Activated CD4-positive, alpha-beta T cell treated with anti-CD3 and anti-CD28 coated beads for 36 hours (primary cell): ENCODE measurements at regions of chr12 and their contacts with region 1.

Region 1: GRCh38 chr12:116277393-116278278 is at the start of gene MED13L:
- DNase-seq: peak; percentile 92
- ATAC-seq: peak; percentile 82
- H3K4me3 Mint-ChIP-seq: peak within 1 kb of the TSS; percentile 95
- H3K27ac Mint-ChIP-seq: peak within 1 kb of the TSS; percentile 89
- H3K4me1 Mint-ChIP-seq: peaks cover 36% of the 10 kb centered on the region
- H3K27me3 Mint-ChIP-seq: no peaks in the 10 kb centered on the region
- total RNA-seq, gene MED13L: 38.5 to 41.9 TPM

Region 2: GRCh38 chr12:115227137-115227615 is 1050.5 kb before region 1 on chr12:
- CTCF ChIA-PET with region 1: no interaction called
- POLR2A ChIA-PET with region 1: no interaction called
- intact Hi-C with region 1: no loop called
- DNase-seq: no peak
- ATAC-seq: no peak
- H3K4me3 Mint-ChIP-seq: no peak overlapping the region
- H3K27ac Mint-ChIP-seq: no peak overlapping the region
- H3K4me1 Mint-ChIP-seq: no peaks in the 10 kb centered on the region
- H3K27me3 Mint-ChIP-seq: no peaks in the 10 kb centered on the region

Region 3: GRCh38 chr12:116066381-116067230 is 211.0 kb before region 1 on chr12:
- CTCF ChIA-PET with region 1: interaction called, 3 read pairs
- POLR2A ChIA-PET with region 1: no interaction called
- intact Hi-C with region 1: loop called in 1 of 2 experiments (anchors 2 kb)
- DNase-seq: peak; percentile 78
- ATAC-seq: peak; percentile 83
- H3K4me3 Mint-ChIP-seq: no peak overlapping the region
- H3K27ac Mint-ChIP-seq: peak overlapping the region; percentile 12
- H3K4me1 Mint-ChIP-seq: peaks cover 36% of the 10 kb centered on the region
- H3K27me3 Mint-ChIP-seq: no peaks in the 10 kb centered on the region

Region 4: GRCh38 chr12:116210131-116210530 is 67.5 kb before region 1 on chr12:
- CTCF ChIA-PET with region 1: no interaction called
- POLR2A ChIA-PET with region 1: no interaction called
- intact Hi-C with region 1: no loop called
- DNase-seq: no peak
- ATAC-seq: no peak
- H3K4me3 Mint-ChIP-seq: no peak overlapping the region
- H3K27ac Mint-ChIP-seq: no peak overlapping the region
- H3K4me1 Mint-ChIP-seq: peaks cover 67% of the 10 kb centered on the region
- H3K27me3 Mint-ChIP-seq: no peaks in the 10 kb centered on the region

Region 5: DNA sequence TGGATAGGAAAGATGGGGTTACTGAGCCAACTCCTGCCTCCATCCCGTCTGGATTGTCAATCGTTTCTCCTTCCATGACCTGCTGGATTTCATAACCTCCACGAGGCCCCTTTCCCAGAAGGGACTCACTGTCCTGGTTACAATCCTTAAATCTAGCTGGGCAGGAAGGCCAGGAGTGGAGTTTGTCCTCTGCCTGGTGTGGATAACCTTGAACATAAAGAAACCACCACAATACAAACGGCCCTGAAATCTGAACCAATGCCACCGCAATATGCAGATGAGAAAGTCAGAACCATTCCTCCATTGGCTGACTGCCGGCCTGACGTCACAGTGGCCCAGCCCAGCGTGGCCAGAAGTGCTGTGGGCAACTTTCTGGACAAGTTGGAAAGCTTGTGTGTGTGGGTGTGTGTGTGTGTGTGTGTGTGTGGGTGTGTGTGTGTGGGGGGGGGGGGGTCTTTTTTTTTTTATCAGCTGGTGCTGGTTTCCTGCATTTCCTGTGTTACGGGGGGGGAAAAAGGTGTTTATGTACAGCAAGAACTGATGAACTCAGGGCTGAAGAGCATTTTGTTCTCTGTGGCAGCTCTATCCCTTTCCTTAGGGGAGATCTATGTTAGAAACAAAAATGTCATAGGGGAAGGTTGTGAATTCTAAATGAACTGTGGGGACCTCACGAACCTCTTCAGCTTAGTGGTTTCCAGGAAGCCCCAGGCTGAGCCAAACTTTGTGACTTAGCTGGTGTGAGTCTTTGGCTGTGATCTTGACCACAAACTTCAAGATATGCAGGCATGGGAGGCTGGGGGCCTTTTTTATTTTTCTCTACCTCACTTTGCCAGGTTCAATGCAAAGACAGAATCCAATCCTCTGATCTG is 81.5 kb after region 1 on chr12:
- CTCF ChIA-PET with region 1: no interaction called
- POLR2A ChIA-PET with region 1: no interaction called
- intact Hi-C with region 1: loop called in 1 of 2 experiments (anchors 1 kb)
- DNase-seq: peak; percentile 76
- ATAC-seq: peak; percentile 67
- H3K4me3 Mint-ChIP-seq: peak overlapping the region; percentile 69
- H3K27ac Mint-ChIP-seq: peak overlapping the region; percentile 90
- H3K4me1 Mint-ChIP-seq: peaks cover 27% of the 10 kb centered on the region
- H3K27me3 Mint-ChIP-seq: no peaks in the 10 kb centered on the region

Region 6: GRCh38 chr12:116559162-116559935 is 281.7 kb after region 1 on chr12 and contains the start of gene MAP1LC3B2:
- CTCF ChIA-PET with region 1: no interaction called
- POLR2A ChIA-PET with region 1: no interaction called
- intact Hi-C with region 1: loop called (anchors 1 to 2 kb)
- DNase-seq: peak; percentile 87
- ATAC-seq: peak; percentile 89
- H3K4me3 Mint-ChIP-seq: peak within 1 kb of the TSS; percentile 66
- H3K27ac Mint-ChIP-seq: peak within 1 kb of the TSS; percentile 96
- H3K4me1 Mint-ChIP-seq: peaks cover 33% of the 10 kb centered on the region
- H3K27me3 Mint-ChIP-seq: no peaks in the 10 kb centered on the region
- total RNA-seq, gene MAP1LC3B2: 1.8 TPM in 1 of 2 experiments, not detected in the other

Region 7: GRCh38 chr12:116737774-116738700 is 460.4 kb after region 1 on chr12 and contains the starts of genes RNFT2 and SPRING1:
- CTCF ChIA-PET with region 1: no interaction called
- POLR2A ChIA-PET with region 1: no interaction called
- intact Hi-C with region 1: loop called in 1 of 2 experiments (anchors 1 kb)
- DNase-seq: peak; percentile 99
- ATAC-seq: peak; percentile 99
- H3K4me3 Mint-ChIP-seq: peak within 1 kb of the TSS; percentile 85
- H3K27ac Mint-ChIP-seq: peak within 1 kb of the TSS; percentile 61
- H3K4me1 Mint-ChIP-seq: peaks cover 22% of the 10 kb centered on the region
- H3K27me3 Mint-ChIP-seq: no peaks in the 10 kb centered on the region
- total RNA-seq, gene RNFT2: 14.7 to 15.0 TPM
- total RNA-seq, gene SPRING1: 15.3 to 17.4 TPM